B cell (primary cell): ENCODE measurements at regions of chr6 and their contacts with region 1.

Region 1: GRCh38 chr6:106608062-106608668 is 21.1 kb downstream of the RTN4IP1 start:
- DNase-seq: peak; percentile 85
- ATAC-seq: peak; percentile 89
- H3K4me3 ChIP-seq: no peak overlapping the region
- H3K4me3 Mint-ChIP-seq: no peak overlapping the region
- H3K27ac ChIP-seq: no peak overlapping the region
- H3K27ac Mint-ChIP-seq: no peak overlapping the region
- H3K4me1 ChIP-seq: peaks cover 25 to 39% of the 10 kb centered on the region in 2 donors
- H3K4me1 Mint-ChIP-seq: peaks cover 43% of the 10 kb centered on the region
- H3K27me3 ChIP-seq: no peaks in the 10 kb centered on the region
- H3K27me3 Mint-ChIP-seq: no peaks in the 10 kb centered on the region
- CTCF ChIP-seq: peak; percentile 92

Region 2: DNA sequence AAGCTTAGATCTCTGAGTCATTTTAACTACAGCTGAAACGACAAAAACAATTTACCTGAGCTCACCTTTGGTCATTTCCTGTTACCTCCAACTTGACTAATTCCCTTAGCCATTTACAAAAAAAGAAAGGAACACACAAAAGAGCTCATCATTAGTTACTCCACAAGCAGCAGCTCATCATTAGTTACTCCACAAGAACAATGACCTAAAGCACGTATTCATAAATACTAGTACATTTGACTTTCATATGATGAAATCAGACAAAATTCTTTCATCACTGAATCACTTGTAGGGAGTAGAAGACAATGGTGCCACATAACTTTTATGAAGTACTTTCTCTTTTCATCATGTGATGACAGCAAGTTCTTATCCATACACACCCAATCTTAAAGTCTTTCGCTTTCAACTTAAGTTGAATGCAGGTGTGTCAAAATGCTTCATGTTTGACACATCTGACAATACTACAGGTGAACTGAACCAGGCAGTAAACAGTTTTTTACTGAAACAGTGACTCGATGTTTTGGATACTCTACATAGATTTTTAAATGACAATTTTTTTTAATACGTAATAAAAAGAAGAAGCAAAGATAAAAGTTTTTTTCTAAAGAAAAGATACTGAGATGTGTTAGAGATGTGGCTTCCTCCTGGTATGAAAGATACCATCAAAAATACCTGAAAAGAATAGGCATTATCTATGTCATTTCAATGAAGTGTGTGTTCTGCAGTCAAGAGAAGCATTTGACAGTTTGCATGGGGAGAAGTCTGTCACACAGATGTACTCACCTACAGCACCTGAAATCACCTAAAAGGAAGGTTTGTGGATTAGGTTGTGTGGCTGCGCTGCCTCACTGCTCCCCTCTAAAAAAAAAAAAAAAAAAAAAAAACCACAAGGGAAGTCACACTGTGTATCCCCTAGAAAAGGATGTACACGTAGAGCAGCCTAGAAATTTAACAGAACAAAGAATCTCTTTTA is 412.9 kb before region 1 on chr6:
- CTCF ChIA-PET with region 1: no interaction called
- POLR2A ChIA-PET with region 1: no interaction called
- intact Hi-C with region 1: no loop called
- DNase-seq: peak; percentile 67
- ATAC-seq: peak; percentile 56
- H3K4me3 ChIP-seq: no peak overlapping the region
- H3K4me3 Mint-ChIP-seq: no peak overlapping the region
- H3K27ac ChIP-seq: peak overlapping the region in 1 of 2 donors; percentile 54
- H3K27ac Mint-ChIP-seq: no peak overlapping the region
- H3K4me1 ChIP-seq: peaks cover 25 to 29% of the 10 kb centered on the region in 2 donors
- H3K4me1 Mint-ChIP-seq: peaks cover 28% of the 10 kb centered on the region
- H3K27me3 ChIP-seq: no peaks in the 10 kb centered on the region
- H3K27me3 Mint-ChIP-seq: no peaks in the 10 kb centered on the region
- CTCF ChIP-seq: no peak

Region 3: DNA sequence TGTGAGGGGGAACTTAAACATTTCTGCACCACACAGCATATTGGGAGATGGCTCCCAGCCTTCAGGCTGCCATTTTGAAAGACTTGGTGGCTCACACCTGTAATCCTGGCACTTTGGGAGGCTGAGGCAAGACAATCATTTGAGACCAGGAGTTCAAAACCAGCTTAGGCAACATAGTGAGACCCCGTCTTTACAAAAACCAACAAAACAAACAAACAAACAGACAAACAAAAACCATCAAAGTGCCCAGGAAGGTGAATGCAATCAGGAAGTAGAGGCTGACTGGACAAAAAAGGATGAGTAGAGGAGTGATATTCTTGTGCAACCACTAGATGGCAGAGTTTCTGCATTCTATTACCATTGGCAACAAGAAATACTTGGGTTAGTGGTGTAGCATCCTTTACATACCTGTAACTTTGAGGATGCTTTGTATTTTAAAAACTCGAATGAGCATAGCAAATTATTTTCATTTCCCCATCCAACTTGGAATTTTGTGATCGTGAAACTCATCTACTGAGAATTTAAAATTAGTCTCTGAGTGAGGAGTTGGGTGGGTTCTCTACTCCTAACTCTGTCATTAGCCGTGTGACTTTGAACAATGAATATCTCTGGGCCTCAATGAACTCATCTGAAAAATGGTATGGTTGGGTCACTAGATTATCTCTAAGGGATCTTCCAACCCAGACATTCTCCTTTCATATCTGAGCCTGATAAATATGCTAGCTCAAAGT is 163.2 kb before region 1 on chr6:
- CTCF ChIA-PET with region 1: interaction called, 10 read pairs
- POLR2A ChIA-PET with region 1: no interaction called
- intact Hi-C with region 1: loop called (anchors 1 kb)
- DNase-seq: peak; percentile 79
- ATAC-seq: peak; percentile 59
- H3K4me3 ChIP-seq: no peak overlapping the region
- H3K4me3 Mint-ChIP-seq: no peak overlapping the region
- H3K27ac ChIP-seq: no peak overlapping the region
- H3K27ac Mint-ChIP-seq: peak overlapping the region; percentile 60
- H3K4me1 ChIP-seq: peaks cover 19 to 22% of the 10 kb centered on the region in 2 donors
- H3K4me1 Mint-ChIP-seq: peaks cover 20% of the 10 kb centered on the region
- H3K27me3 ChIP-seq: peaks cover 0 to 3% (median 0%) of the 10 kb centered on the region in 4 experiments
- H3K27me3 Mint-ChIP-seq: peaks cover 20% of the 10 kb centered on the region
- CTCF ChIP-seq: peak; percentile 92

Region 4: DNA sequence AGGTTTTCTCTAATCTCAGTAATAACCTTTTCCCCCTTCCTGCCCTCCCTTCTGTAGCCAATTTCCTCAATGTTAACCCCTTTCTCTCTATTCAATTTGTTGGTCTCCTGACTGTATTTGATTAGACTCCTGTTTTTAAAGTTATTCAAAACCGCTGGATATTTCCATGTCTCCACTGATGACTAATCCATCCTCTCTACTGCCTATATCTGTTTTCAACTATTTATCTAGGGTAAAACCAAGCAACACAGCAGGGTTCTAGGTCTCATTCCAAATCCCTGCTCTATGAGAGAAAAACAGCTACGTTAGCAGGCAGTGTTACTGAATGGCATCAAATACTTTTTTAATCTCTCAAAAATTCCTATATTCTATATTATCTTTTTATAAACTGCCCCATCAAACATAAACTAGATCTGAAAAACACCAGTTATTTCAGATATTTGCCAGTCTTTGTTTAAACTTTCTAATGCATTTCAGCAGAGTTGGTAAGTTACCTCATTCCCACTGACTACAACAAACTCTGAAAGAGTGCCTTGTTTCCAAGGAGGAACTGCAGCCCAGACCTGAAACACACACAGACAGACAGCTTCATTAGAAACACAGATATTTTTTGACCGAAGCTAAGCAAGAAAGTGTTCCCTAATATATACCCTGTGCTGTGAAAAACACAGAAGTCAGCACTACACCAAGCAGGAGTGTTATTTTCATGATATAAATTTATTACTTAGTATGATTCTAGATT is 12.9 kb after region 1 on chr6:
- CTCF ChIA-PET with region 1: interaction called, 75 read pairs
- POLR2A ChIA-PET with region 1: interaction called, 8 read pairs
- intact Hi-C with region 1: no loop called
- DNase-seq: no peak
- ATAC-seq: no peak
- H3K4me3 ChIP-seq: no peak overlapping the region
- H3K4me3 Mint-ChIP-seq: no peak overlapping the region
- H3K27ac ChIP-seq: no peak overlapping the region
- H3K27ac Mint-ChIP-seq: no peak overlapping the region
- H3K4me1 ChIP-seq: peaks cover 3 to 7% of the 10 kb centered on the region in 2 donors
- H3K4me1 Mint-ChIP-seq: peaks cover 24% of the 10 kb centered on the region
- H3K27me3 ChIP-seq: no peaks in the 10 kb centered on the region
- H3K27me3 Mint-ChIP-seq: no peaks in the 10 kb centered on the region
- CTCF ChIP-seq: no peak

Region 5: DNA sequence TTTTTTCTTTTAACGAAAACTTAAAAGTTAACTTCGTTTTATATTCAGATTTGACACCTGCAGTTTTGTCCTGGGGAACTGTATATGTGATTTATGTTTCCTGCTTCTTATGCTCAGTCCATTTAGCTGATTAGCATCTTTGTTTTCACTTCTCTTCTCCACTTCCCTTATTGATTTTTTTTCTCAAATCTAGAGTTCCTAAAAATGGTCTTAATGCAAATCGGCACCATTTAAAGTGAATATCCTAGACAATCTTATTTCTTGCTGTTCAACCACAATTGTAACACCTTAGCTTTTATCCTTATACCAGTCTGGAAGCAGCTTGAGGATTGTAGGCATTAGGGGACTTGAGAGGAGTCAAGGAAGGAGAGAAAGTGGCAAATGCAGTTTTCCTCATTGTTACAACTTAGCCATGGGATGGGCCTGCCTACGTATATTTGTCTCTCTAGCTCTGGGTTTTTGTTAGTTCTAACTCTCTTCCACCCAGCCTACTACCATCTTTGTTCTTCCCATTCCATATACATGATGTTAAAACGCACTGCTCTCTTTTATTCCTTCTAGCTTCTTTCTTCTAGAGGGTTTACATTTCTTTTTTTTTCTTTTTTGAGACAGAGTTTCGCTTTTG is 29.7 kb after region 1 on chr6:
- CTCF ChIA-PET with region 1: interaction called, 22 read pairs
- POLR2A ChIA-PET with region 1: interaction called, 3 read pairs
- intact Hi-C with region 1: no loop called
- DNase-seq: peak; percentile 79
- ATAC-seq: peak; percentile 85
- H3K4me3 ChIP-seq: peak overlapping the region; percentile 25 to 59 (median 35)
- H3K4me3 Mint-ChIP-seq: peak overlapping the region; percentile 74
- H3K27ac ChIP-seq: peak overlapping the region; percentile 81 to 89
- H3K27ac Mint-ChIP-seq: peak overlapping the region; percentile 95
- H3K4me1 ChIP-seq: peaks cover 64 to 68% of the 10 kb centered on the region in 2 donors
- H3K4me1 Mint-ChIP-seq: peaks cover 64% of the 10 kb centered on the region
- H3K27me3 ChIP-seq: no peaks in the 10 kb centered on the region
- H3K27me3 Mint-ChIP-seq: no peaks in the 10 kb centered on the region
- CTCF ChIP-seq: no peak

Region 6: DNA sequence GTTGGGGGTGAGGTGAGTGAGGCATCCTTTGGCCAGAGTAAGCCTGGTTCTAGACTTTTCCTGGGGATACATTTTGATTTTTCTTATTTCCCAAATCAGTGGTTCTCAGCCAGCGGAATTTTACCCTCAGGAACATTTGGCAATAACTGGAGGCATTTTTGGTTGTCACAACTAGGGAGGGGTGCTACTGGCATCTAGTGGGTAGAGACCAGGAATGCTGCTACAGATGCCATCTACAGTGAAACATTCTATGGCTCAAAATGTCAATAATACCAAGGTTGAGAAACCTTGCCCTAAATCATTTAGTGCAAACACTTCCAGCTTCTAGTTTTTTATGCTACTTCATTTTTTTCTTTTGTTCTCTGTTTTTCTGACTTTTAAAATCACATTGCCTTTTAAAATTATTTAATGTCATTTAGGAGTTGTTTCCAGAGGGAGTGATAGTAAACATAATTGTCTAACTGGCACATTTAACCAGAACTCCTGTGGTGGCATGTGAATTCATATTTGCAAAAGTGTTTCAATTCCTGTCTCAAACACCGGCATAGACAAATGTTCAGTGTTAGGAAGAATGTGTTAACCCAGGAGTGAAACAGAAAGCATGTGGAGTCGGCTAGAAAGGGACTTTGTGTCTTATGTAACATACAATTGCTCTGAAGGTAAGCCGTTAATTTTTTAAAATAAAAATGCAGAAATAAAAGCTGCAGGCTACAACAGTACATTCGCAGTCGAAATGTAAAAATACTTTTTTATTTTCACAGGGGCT is 80.2 kb after region 1 on chr6:
- CTCF ChIA-PET with region 1: interaction called, 80 read pairs
- POLR2A ChIA-PET with region 1: interaction called, 8 read pairs
- intact Hi-C with region 1: loop called (anchors 1 kb)
- DNase-seq: peak; percentile 32
- ATAC-seq: peak; percentile 33
- H3K4me3 ChIP-seq: peak overlapping the region in 1 of 5 experiments; percentile 1
- H3K4me3 Mint-ChIP-seq: peak overlapping the region; percentile 29
- H3K27ac ChIP-seq: no peak overlapping the region
- H3K27ac Mint-ChIP-seq: peak overlapping the region; percentile 26
- H3K4me1 ChIP-seq: peaks cover 19 to 30% of the 10 kb centered on the region in 2 donors
- H3K4me1 Mint-ChIP-seq: peaks cover 32% of the 10 kb centered on the region
- H3K27me3 ChIP-seq: no peaks in the 10 kb centered on the region
- H3K27me3 Mint-ChIP-seq: no peaks in the 10 kb centered on the region
- CTCF ChIP-seq: no peak

Region 7: DNA sequence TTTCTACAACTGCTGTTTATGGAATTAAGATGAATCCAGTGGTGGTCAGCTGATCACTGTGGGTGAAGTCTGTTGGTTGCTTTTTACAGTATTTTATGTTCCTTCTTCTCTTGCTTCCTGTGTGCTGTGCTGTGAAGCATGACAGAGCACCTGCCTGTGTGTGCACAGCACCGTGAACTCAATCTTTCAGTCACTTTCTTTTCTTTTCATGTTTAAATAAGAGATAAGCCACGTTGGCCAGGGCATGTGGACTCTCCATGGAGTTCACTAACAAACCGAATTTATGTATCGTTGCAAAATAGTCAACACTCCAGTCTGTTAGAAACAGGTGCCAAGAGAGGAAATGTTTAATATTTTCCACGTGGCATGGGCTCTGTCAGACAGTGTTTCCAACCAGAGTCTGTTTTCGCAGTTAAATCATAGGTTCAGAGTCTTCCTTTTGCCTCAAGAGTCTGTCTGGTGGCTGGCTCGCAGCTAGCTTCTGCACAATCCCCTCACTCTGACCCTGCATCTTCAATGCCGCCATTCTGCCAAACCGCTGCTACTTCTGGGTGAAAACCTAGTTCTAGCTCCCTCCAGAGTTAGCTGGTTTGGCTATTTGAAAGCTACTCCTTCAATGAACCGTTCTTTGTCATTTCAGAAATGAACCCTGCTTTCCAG is 94.4 kb after region 1 on chr6:
- CTCF ChIA-PET with region 1: interaction called, 14 read pairs
- POLR2A ChIA-PET with region 1: interaction called, 4 read pairs
- intact Hi-C with region 1: loop called (anchors 5 kb)
- DNase-seq: peak; percentile 82
- ATAC-seq: peak; percentile 88
- H3K4me3 ChIP-seq: peak overlapping the region; percentile 18 to 45 (median 33)
- H3K4me3 Mint-ChIP-seq: peak overlapping the region; percentile 79
- H3K27ac ChIP-seq: peak overlapping the region; percentile 90 to 94
- H3K27ac Mint-ChIP-seq: peak overlapping the region; percentile 98
- H3K4me1 ChIP-seq: peaks cover 72 to 75% of the 10 kb centered on the region in 2 donors
- H3K4me1 Mint-ChIP-seq: peaks cover 89% of the 10 kb centered on the region
- H3K27me3 ChIP-seq: no peaks in the 10 kb centered on the region
- H3K27me3 Mint-ChIP-seq: no peaks in the 10 kb centered on the region
- CTCF ChIP-seq: no peak

Region 8: DNA sequence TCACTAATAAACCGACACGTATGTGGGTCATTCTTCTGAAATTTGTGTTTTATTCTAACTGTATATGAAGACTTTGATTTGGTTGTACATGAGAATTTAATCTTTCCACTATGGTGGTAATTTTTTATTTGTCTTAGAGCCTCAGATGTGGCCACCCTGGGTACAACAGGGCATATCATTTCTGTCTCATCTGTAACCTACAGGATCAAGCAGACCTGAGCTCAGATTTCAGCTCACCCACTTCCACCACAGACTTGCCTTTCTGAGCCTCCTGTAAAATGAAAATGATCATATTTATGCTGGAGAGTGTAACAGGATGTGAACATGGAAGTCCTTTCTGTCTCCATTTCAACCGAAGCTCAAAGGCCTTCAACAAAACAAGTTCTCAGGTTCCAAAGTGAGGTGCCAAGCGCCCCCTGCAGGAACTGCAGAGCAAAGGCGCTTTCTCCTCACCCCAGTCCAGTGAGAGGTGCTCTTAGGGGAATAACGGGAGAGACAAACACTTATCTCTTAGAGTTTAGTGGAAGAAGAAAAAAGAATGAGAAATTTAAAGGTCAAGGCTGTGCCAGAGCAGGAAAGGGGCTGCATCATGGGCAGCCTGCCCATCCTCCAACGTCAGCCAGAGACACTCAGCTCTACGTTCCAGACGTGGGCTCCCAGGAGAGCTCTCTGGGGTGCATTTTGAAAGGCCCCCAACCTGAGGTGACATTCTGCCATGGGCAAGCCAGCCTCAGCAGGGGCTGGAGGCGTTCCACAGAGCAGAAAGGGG is 389.4 kb after region 1 on chr6:
- CTCF ChIA-PET with region 1: interaction called, 16 read pairs
- POLR2A ChIA-PET with region 1: no interaction called
- intact Hi-C with region 1: no loop called
- DNase-seq: peak; percentile 71
- ATAC-seq: peak; percentile 64
- H3K4me3 ChIP-seq: no peak overlapping the region
- H3K4me3 Mint-ChIP-seq: no peak overlapping the region
- H3K27ac ChIP-seq: no peak overlapping the region
- H3K27ac Mint-ChIP-seq: no peak overlapping the region
- H3K4me1 ChIP-seq: peaks cover 0 to 5% of the 10 kb centered on the region in 2 donors
- H3K4me1 Mint-ChIP-seq: no peaks in the 10 kb centered on the region
- H3K27me3 ChIP-seq: no peaks in the 10 kb centered on the region
- H3K27me3 Mint-ChIP-seq: peaks cover 3% of the 10 kb centered on the region
- CTCF ChIP-seq: peak; percentile 95